Activated CD4-positive, alpha-beta memory T cell treated with anti-CD3 and anti-CD28 coated beads for 36 hours (primary cell): ENCODE measurements at regions of chr9 and their contacts with region 1.

Region 1: GRCh38 chr9:98118640-98119601 is at the start of gene TRIM14:
- DNase-seq: peak; percentile 75
- H3K4me3 Mint-ChIP-seq: peak within 1 kb of the TSS; percentile 89
- H3K27ac Mint-ChIP-seq: peak within 1 kb of the TSS; percentile 95
- H3K4me1 Mint-ChIP-seq: peaks cover 39% of the 10 kb centered on the region
- H3K27me3 Mint-ChIP-seq: no peaks in the 10 kb centered on the region
- total RNA-seq, gene TRIM14: 49.1 to 52.7 TPM

Region 2: DNA sequence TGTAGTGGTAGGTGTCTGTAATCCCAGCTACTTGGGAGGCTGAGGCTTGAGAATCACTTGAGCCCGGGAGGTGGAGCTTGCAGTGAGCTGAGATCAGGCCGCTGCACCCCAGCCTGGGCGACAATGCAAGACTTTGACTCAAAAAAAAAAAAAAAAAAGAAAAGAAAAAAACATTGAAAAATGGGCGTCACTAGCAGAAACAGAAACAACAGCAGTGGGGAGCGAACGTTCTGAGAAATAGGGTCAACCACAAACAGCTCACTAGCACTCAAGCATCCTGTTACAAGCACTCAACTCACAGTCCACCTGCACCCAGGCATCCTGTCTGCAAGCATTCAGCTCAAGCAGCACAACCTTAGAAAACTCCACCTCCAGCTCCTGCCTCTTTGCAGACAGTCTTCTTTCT is 17.1 kb before region 1 on chr9:
- CTCF ChIA-PET with region 1: interaction called, 16 read pairs
- POLR2A ChIA-PET with region 1: interaction called, 12 read pairs
- intact Hi-C with region 1: loop called (anchors 1 kb)
- DNase-seq: peak; percentile 89
- H3K4me3 Mint-ChIP-seq: peak overlapping the region; percentile 66
- H3K27ac Mint-ChIP-seq: peak overlapping the region; percentile 95
- H3K4me1 Mint-ChIP-seq: peaks cover 88% of the 10 kb centered on the region
- H3K27me3 Mint-ChIP-seq: no peaks in the 10 kb centered on the region

Region 3: GRCh38 chr9:98108531-98109031 is 10.3 kb before region 1 on chr9:
- CTCF ChIA-PET with region 1: interaction called, 10 read pairs
- POLR2A ChIA-PET with region 1: interaction called, 26 read pairs
- intact Hi-C with region 1: loop called (anchors 1 kb)
- DNase-seq: peak; percentile 51
- H3K4me3 Mint-ChIP-seq: peak overlapping the region; percentile 62
- H3K27ac Mint-ChIP-seq: peak overlapping the region; percentile 97
- H3K4me1 Mint-ChIP-seq: peaks cover 80% of the 10 kb centered on the region
- H3K27me3 Mint-ChIP-seq: no peaks in the 10 kb centered on the region

Region 4: GRCh38 chr9:98192503-98193335 is 73.8 kb after region 1 on chr9 and contains the start of gene CORO2A:
- CTCF ChIA-PET with region 1: interaction called, 6 read pairs
- POLR2A ChIA-PET with region 1: interaction called, 20 read pairs
- intact Hi-C with region 1: loop called (anchors 1 kb)
- DNase-seq: peak; percentile 79
- H3K4me3 Mint-ChIP-seq: peak within 1 kb of the TSS; percentile 86
- H3K27ac Mint-ChIP-seq: peak within 1 kb of the TSS; percentile 49
- H3K4me1 Mint-ChIP-seq: peaks cover 21% of the 10 kb centered on the region
- H3K27me3 Mint-ChIP-seq: no peaks in the 10 kb centered on the region
- total RNA-seq, gene CORO2A: 9.8 to 9.9 TPM

Region 5: GRCh38 chr9:98207606-98208005 is 88.7 kb after region 1 on chr9:
- CTCF ChIA-PET with region 1: interaction called, 10 read pairs
- POLR2A ChIA-PET with region 1: no interaction called
- intact Hi-C with region 1: loop called (anchors 5 kb)
- DNase-seq: no peak
- H3K4me3 Mint-ChIP-seq: no peak overlapping the region
- H3K27ac Mint-ChIP-seq: no peak overlapping the region
- H3K4me1 Mint-ChIP-seq: peaks cover 2% of the 10 kb centered on the region
- H3K27me3 Mint-ChIP-seq: no peaks in the 10 kb centered on the region

Region 6: GRCh38 chr9:98226957-98227356 is 108.0 kb after region 1 on chr9:
- CTCF ChIA-PET with region 1: no interaction called
- POLR2A ChIA-PET with region 1: no interaction called
- intact Hi-C with region 1: no loop called
- DNase-seq: no peak
- H3K4me3 Mint-ChIP-seq: no peak overlapping the region
- H3K27ac Mint-ChIP-seq: no peak overlapping the region
- H3K4me1 Mint-ChIP-seq: no peaks in the 10 kb centered on the region
- H3K27me3 Mint-ChIP-seq: no peaks in the 10 kb centered on the region

Region 7: GRCh38 chr9:98263482-98264357 is 144.8 kb after region 1 on chr9:
- CTCF ChIA-PET with region 1: interaction called, 10 read pairs
- POLR2A ChIA-PET with region 1: no interaction called
- intact Hi-C with region 1: no loop called
- DNase-seq: peak; percentile 90
- H3K4me3 Mint-ChIP-seq: no peak overlapping the region
- H3K27ac Mint-ChIP-seq: peak overlapping the region; percentile 39
- H3K4me1 Mint-ChIP-seq: no peaks in the 10 kb centered on the region
- H3K27me3 Mint-ChIP-seq: peaks cover 3% of the 10 kb centered on the region